Activated B cell treated with CpG ODN at 0.5 μM for 24 hours (primary cell): ENCODE measurements at regions of chr3 and their contacts with region 1.

Region 1: GRCh38 chr3:71416876-71417275 is 166.7 kb downstream of the FOXP1 start:
- DNase-seq: no peak
- ATAC-seq: peak; percentile 54
- H3K4me3 Mint-ChIP-seq: peak overlapping the region; percentile 42
- H3K27ac Mint-ChIP-seq: peak overlapping the region; percentile 81
- H3K4me1 Mint-ChIP-seq: peaks cover 82% of the 10 kb centered on the region
- H3K27me3 Mint-ChIP-seq: no peaks in the 10 kb centered on the region
- CTCF ChIP-seq: no peak

Region 2: GRCh38 chr3:71428841-71429596 is 12.1 kb after region 1 on chr3:
- CTCF ChIA-PET with region 1: no interaction called
- POLR2A ChIA-PET with region 1: interaction called, 11 read pairs
- intact Hi-C with region 1: loop called (anchors 1 kb)
- DNase-seq: no peak
- ATAC-seq: peak; percentile 40
- H3K4me3 Mint-ChIP-seq: no peak overlapping the region
- H3K27ac Mint-ChIP-seq: peak overlapping the region; percentile 64
- H3K4me1 Mint-ChIP-seq: peaks cover 94% of the 10 kb centered on the region
- H3K27me3 Mint-ChIP-seq: no peaks in the 10 kb centered on the region
- CTCF ChIP-seq: no peak

Region 3: DNA sequence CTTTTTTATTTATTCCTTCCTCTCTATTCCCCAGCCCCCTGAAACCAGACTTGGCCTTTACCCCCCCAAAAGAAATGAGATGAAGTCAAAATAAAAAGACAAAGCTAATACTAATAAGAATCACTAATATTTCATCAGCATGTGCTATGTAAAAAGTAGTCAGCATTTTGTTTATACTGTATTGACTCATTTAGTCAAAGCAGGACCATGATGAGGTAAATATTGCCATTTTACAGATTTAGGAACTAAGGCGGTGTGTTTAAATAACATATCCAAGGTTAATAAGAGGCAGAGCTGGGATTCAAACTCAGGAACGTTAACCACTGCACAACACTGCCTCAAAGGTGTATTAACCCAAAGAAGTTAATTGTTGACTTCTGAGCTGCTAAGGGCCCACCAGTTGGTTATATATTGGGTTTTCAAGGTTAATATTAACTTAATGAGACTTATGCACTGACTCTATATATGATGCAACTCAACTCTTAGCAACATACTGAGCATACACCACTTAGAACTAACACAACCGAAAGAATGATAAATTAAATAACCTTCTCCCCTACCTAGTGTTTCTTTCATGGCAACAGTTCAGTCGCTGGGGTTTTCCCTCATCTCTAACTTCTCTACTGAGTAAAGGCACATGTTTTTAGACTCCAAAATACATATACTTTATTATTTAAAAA is 132.0 kb after region 1 on chr3:
- CTCF ChIA-PET with region 1: no interaction called
- POLR2A ChIA-PET with region 1: no interaction called
- intact Hi-C with region 1: no loop called
- DNase-seq: no peak
- ATAC-seq: peak; percentile 70
- H3K4me3 Mint-ChIP-seq: no peak overlapping the region
- H3K27ac Mint-ChIP-seq: no peak overlapping the region
- H3K4me1 Mint-ChIP-seq: peaks cover 25% of the 10 kb centered on the region
- H3K27me3 Mint-ChIP-seq: no peaks in the 10 kb centered on the region
- CTCF ChIP-seq: no peak

Region 4: DNA sequence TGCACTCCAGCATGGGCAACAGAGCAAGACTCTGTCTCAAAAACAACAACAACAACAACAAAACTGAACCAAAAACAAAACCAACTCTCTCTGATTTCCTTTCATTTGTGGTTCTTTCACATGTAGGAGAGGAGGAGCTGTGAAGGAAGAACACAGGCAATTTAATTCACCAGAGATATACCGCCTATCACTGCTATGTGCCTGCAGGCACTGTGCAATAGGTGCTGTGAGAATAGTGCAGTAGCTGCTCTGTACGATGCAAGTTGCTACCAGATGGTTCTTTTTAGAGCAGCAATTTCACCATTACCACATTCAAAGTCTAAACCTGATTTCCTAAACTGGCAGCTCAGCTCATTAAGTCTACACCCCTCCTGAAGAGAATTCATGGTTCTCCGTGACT is 379.4 kb after region 1 on chr3:
- CTCF ChIA-PET with region 1: no interaction called
- POLR2A ChIA-PET with region 1: no interaction called
- intact Hi-C with region 1: no loop called
- DNase-seq: no peak
- ATAC-seq: no peak
- H3K4me3 Mint-ChIP-seq: no peak overlapping the region
- H3K27ac Mint-ChIP-seq: no peak overlapping the region
- H3K4me1 Mint-ChIP-seq: no peaks in the 10 kb centered on the region
- H3K27me3 Mint-ChIP-seq: peaks cover 28% of the 10 kb centered on the region
- CTCF ChIP-seq: no peak